Left ventricle myocardium superior (tissue), 1 donor: ENCODE measurements at regions of chr14 and their contacts with region 1.

Region 1: DNA sequence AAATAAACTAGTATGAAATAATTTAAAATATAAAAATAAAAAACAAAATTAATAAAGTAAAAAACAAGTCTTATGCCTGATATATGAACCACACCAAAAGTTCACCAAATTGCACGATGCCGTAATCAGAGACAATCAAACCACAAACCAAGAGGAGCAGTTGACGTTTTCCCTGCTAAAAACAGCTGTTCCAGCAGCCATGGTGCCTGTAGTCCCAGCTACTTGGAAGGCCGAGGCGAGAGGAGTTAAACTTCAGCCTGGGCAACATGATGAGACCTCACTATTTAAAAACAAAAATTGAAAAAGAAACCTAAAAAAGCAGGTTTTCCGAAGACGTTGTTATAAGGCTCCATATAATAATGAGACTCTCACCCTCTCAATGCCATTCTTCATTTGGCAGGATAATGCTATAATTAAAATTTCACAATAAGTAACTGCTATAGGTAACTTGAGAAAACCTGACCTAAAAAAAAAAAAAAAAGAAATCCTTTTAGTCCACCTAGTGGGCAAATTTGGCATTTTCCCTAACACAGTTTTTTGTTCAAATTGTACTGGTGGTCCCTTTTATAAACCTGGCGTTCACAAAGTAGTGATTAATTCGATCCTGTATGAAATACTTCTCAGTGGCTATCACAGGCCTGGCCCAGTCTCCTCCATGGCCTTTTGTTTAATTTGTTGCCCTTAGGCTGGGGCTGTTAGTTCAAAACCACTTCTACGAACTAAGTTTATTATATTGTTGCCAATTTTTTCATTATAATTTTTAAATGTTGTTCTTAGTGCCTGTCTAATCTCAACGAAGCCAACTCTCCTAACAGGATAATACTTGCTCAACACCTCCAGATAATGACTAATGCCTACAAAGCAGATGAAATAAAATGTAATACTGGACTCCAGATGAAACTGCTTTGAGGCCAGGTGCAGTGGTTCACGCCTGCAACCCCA is 62.1 kb downstream of the TNFAIP2 start:
- DNase-seq: no peak
- ATAC-seq: no peak

Region 2: GRCh38 chr14:102966681-102967505 is 218.4 kb before region 1 on chr14:
- intact Hi-C with region 1: no loop called
- DNase-seq: no peak
- ATAC-seq: no peak

Region 3: DNA sequence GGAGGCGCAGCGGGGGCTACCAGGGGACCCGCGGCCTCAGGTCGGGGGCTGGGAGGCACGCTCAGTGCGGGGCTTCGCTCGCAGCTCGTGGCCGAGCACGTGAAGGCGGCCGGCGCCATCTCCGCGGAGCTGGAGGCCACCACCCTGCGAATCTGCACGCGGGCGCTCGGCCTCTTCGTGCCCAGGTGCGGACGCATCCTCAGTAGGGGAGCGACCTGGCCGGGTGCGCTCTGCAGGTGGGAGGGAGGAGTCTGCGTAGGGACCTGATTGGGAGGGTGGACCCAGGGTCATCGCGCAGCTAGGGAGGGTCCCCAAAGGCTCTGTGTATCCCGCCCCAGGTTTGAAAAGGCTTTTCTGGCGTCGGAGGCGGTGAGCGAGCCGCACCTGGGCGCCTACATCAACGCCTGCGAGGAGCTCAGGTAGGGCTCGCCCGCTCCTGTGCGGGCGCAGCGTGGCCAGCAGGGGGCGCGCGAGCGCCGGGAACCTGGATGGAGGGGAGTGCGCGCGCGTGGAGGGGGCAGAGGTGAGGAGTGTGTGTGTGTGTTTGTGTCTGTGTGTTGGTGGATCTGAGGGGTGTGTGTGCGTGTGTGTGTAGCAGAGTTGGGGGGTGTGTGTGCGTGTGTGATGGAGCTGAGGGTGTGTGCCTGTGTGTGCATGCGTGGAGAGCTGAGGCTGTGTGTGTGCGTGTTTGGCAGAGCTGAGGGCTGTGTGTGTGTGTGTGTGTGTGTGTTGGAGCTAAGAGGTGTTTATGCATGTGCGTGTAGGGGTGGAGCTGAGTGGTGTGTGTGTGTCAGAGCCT is 80.5 kb before region 1 on chr14:
- intact Hi-C with region 1: loop called (anchors 10 kb)
- DNase-seq: peak; percentile 82
- ATAC-seq: peak; percentile 85